RWPE1 (cell line): ENCODE measurements at regions of chr2 and their contacts with region 1.

Region 1: GRCh38 chr2:68463287-68463877 is 3.7 kb downstream of the FBXO48 start:
- DNase-seq: no peak
- H3K27ac ChIP-seq: no peak overlapping the region
- CTCF ChIP-seq: peak; percentile 77

Region 2: DNA sequence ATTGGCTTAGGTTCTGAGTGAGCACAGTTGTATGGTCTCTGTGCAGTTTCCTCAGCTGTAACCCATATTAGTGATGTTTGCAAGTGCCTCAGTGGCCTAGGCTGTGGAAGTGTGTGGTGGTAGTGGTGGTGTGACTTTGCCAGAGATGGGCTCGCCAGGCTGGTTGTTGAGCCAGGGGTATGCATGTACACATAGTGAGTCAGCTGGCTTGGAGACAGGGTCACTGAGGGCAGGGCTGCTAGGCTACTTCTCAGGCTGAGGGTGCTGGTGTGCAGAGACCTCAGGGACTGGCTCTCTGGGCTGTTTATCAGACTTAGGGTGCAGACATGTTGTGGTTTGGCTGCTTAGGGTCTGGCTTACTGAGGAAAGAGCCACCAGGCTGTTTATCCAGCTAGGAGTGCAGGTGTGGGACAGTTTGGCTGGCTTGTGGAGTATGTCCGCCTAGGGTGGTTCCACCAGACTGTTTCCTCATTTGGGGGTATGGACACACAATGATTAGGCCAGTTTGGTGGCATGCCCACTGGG is 19.0 kb after region 1 on chr2:
- CTCF ChIA-PET with region 1: interaction called, 11 read pairs
- POLR2A ChIA-PET with region 1: no interaction called
- DNase-seq: no peak
- H3K27ac ChIP-seq: no peak overlapping the region
- CTCF ChIP-seq: no peak